Ovary (tissue), 10 donors: ENCODE measurements at regions of chr9 and their contacts with region 1.

Region 1: GRCh38 chr9:89602978-89603766 is 1.6 kb upstream of the GADD45G start:
- DNase-seq: peak; percentile 86 to 95 (median 93)
- H3K4me3 ChIP-seq: peak overlapping the region; percentile 74
- H3K27ac ChIP-seq: peak overlapping the region in 1 of 2 donors; percentile 28
- H3K4me1 ChIP-seq: peaks cover 6% of the 10 kb centered on the region
- H3K27me3 ChIP-seq: no peaks in the 10 kb centered on the region
- CTCF ChIP-seq: peak; percentile 60 to 85 (median 66)
- EP300 ChIP-seq: no peak
- POLR2A ChIP-seq: no peak

Region 2: DNA sequence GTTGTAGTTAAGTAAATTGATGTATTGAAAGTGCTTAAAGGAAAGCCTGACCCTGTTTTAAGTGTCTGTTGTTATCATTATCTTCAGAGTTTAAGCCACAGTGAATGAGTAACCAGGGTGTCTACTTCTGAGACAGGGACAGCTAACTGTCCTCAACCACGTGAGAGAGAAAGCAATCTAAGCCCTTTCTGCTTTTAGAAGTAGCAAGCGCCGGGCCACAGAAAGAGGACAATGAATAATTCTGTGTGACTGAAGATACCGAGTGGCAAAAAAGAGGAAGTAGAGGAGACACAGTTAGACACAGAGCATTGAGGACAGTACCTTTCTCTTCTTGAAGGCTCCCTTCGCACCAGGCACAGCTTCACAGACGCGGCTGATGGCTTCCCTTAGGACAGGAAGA is 525.7 kb before region 1 on chr9:
- intact Hi-C with region 1: no loop called
- DNase-seq: no peak
- H3K4me3 ChIP-seq: no peak overlapping the region
- H3K27ac ChIP-seq: no peak overlapping the region
- H3K4me1 ChIP-seq: no peaks in the 10 kb centered on the region
- H3K27me3 ChIP-seq: no peaks in the 10 kb centered on the region
- CTCF ChIP-seq: no peak
- EP300 ChIP-seq: no peak
- POLR2A ChIP-seq: no peak

Region 3: GRCh38 chr9:89448381-89448780 is 154.8 kb before region 1 on chr9:
- intact Hi-C with region 1: no loop called
- DNase-seq: no peak
- H3K4me3 ChIP-seq: no peak overlapping the region
- H3K27ac ChIP-seq: no peak overlapping the region
- H3K4me1 ChIP-seq: no peaks in the 10 kb centered on the region
- H3K27me3 ChIP-seq: no peaks in the 10 kb centered on the region
- CTCF ChIP-seq: no peak
- EP300 ChIP-seq: no peak
- POLR2A ChIP-seq: no peak

Region 4: GRCh38 chr9:89732295-89732938 is 129.2 kb after region 1 on chr9:
- intact Hi-C with region 1: loop called in 1 of 4 experiments (anchors 10 kb)
- DNase-seq: peak in 2 of 5 donors; percentile 32 to 63
- H3K4me3 ChIP-seq: no peak overlapping the region
- H3K27ac ChIP-seq: peak overlapping the region in 1 of 2 donors; percentile 49
- H3K4me1 ChIP-seq: peaks cover 19% of the 10 kb centered on the region
- H3K27me3 ChIP-seq: no peaks in the 10 kb centered on the region
- CTCF ChIP-seq: no peak
- EP300 ChIP-seq: no peak
- POLR2A ChIP-seq: no peak

Region 5: DNA sequence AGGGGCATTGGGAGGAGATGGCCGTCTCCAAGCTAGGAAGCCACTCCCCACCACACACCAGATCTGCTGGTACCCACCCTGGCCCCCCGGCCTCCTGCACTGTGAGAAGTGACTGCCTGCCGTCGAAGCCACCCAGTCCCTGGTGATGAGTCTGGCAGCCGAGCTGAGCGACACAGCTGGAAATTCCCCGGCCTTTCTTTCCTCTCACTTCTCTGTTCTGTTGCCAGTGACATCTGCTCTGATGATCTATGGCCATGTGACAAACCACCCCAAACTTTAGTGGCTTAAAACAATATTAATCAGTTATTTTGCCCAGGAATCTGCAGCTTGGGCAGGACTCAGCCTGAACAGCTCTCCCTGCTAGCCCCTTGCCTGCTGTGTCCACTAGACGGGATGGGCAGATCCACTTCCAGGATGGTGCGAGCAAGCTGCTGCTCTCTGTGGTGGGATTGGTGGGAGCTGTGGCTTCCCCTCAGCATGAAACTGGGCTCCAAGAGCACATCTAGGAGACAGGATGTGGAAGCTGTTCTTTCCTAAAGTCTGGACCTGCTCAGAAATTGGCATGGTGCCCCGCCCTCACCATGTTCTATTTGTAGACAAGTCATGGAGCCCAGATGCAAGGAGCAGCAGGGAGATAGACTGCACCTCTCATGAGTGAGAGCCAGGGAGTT is 212.9 kb after region 1 on chr9:
- intact Hi-C with region 1: loop called in 1 of 4 experiments (anchors 10 kb)
- DNase-seq: peak; percentile 60 to 80 (median 66)
- H3K4me3 ChIP-seq: no peak overlapping the region
- H3K27ac ChIP-seq: peak overlapping the region in 1 of 2 donors; percentile 68
- H3K4me1 ChIP-seq: peaks cover 11% of the 10 kb centered on the region
- H3K27me3 ChIP-seq: no peaks in the 10 kb centered on the region
- CTCF ChIP-seq: no peak
- EP300 ChIP-seq: no peak
- POLR2A ChIP-seq: no peak

Region 6: GRCh38 chr9:89999534-90000370 is 396.6 kb after region 1 on chr9:
- intact Hi-C with region 1: loop called (anchors 10 kb)
- DNase-seq: peak; percentile 60 to 82 (median 72)
- H3K4me3 ChIP-seq: peak overlapping the region; percentile 10
- H3K27ac ChIP-seq: peak overlapping the region; percentile 58 to 82
- H3K4me1 ChIP-seq: peaks cover 33% of the 10 kb centered on the region
- H3K27me3 ChIP-seq: no peaks in the 10 kb centered on the region
- CTCF ChIP-seq: no peak
- EP300 ChIP-seq: no peak
- POLR2A ChIP-seq: no peak

Region 7: DNA sequence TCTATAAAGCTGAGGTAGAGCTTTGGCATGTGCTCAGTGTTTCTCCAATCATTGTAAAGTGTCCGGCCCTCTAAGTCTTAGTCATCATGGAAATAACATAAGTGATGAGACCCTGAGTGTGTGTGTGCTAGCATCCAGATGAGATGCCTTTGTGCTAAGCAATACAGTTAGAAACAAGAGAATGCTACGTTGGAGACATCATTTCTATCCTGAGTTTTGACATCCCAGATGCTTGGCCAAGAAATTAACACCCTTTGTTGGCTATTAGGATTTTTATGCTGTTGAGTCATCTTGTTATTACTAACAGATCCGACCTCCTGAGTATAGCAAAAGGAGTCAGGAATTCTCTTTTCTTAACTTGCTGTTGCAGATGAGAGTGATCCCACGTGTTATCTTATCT is 509.6 kb after region 1 on chr9:
- intact Hi-C with region 1: no loop called
- DNase-seq: no peak
- H3K4me3 ChIP-seq: no peak overlapping the region
- H3K27ac ChIP-seq: no peak overlapping the region
- H3K4me1 ChIP-seq: peaks cover 11% of the 10 kb centered on the region
- H3K27me3 ChIP-seq: no peaks in the 10 kb centered on the region
- CTCF ChIP-seq: no peak
- EP300 ChIP-seq: no peak
- POLR2A ChIP-seq: no peak